Activated naive CD4-positive, alpha-beta T cell treated with anti-CD3 and anti-CD28 coated beads for 36 hours (primary cell): ENCODE measurements at regions of chr17 and their contacts with region 1.

Region 1: DNA sequence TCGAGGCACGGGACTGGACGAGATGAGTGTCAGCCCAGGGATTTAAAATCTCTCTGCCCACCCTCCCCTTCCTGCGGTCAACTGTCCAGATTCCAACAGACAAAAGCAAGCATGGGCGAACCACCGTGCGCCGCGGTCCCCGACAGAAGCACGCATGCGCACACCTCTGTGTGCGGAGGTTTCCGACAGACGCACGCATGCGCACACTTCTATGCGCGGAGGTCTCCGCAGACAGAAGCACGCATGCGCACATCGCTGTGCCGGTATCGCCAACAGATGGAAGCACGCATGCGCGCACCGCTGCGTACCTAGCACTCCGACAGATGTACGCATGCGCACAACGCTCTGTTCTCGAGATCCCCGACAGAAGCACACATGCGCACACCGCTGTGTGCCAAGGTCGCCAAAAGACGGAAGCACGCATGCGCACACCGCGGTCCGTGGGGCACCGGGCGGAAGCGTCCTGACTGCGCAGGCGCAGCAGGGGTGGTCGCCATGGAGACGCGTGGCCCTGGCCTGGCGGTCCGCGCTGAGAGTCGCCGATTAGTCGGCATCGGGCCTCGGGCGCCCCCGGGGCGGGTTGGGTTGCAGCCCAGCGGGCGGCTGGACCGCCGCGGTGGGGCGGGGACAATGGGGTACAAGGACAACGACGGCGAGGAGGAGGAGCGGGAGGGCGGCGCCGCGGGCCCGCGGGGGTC is 57.4 kb upstream of the RPH3AL start:
- DNase-seq: peak; percentile 100
- H3K4me3 Mint-ChIP-seq: peak overlapping the region; percentile 76
- H3K27ac Mint-ChIP-seq: peak overlapping the region; percentile 89
- H3K4me1 Mint-ChIP-seq: peaks cover 66% of the 10 kb centered on the region
- H3K27me3 Mint-ChIP-seq: peaks cover 3% of the 10 kb centered on the region

Region 2: DNA sequence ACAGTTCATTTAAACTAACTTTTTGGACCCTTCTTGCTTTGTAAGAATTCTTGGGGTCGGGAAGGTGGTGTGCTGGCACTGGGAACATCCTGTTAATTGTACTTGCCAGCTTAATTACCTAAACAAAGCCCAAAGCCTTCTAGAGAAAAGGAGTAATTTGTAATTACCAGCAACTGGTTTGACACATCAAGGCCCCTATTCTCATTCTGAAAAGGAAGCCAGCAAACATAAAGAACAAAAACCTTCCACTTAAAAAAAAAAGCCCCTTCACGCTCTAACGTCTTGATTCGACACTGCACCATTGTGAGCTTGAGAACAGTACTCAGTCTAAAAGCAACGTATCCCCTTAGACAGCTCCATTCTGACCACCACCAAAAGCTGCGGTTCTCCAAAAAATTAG is 17.3 kb after region 1 on chr17:
- CTCF ChIA-PET with region 1: interaction called, 11 read pairs
- intact Hi-C with region 1: no loop called
- DNase-seq: no peak
- H3K4me3 Mint-ChIP-seq: no peak overlapping the region
- H3K27ac Mint-ChIP-seq: peak overlapping the region; percentile 41
- H3K4me1 Mint-ChIP-seq: peaks cover 13% of the 10 kb centered on the region
- H3K27me3 Mint-ChIP-seq: no peaks in the 10 kb centered on the region

Region 3: DNA sequence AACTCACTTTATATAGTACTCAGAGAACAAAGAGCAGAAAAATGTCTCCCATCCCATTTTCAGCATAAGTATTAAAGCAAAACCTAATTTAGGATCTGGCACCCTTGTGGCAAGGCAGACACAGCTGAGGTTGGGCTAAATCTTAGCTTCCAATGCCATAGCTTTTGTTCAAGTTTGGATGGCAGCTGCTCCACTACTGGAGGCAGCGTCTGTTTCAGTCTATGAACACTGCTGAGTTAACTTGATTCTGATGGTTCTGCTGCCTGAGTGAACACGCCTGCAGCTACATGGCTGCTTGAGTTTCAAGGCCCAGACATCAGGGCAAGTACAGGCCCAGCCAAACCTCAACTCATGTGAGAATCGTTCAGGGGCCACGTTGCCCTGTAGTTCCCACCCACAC is 120.9 kb after region 1 on chr17:
- CTCF ChIA-PET with region 1: interaction called, 13 read pairs
- intact Hi-C with region 1: no loop called
- DNase-seq: no peak
- H3K4me3 Mint-ChIP-seq: no peak overlapping the region
- H3K27ac Mint-ChIP-seq: no peak overlapping the region
- H3K4me1 Mint-ChIP-seq: peaks cover 5% of the 10 kb centered on the region
- H3K27me3 Mint-ChIP-seq: no peaks in the 10 kb centered on the region

Region 4: GRCh38 chr17:588519-588918 is 178.5 kb after region 1 on chr17:
- CTCF ChIA-PET with region 1: no interaction called
- intact Hi-C with region 1: loop called (anchors 5 kb)
- DNase-seq: no peak
- H3K4me3 Mint-ChIP-seq: no peak overlapping the region
- H3K27ac Mint-ChIP-seq: no peak overlapping the region
- H3K4me1 Mint-ChIP-seq: no peaks in the 10 kb centered on the region
- H3K27me3 Mint-ChIP-seq: no peaks in the 10 kb centered on the region

Region 5: DNA sequence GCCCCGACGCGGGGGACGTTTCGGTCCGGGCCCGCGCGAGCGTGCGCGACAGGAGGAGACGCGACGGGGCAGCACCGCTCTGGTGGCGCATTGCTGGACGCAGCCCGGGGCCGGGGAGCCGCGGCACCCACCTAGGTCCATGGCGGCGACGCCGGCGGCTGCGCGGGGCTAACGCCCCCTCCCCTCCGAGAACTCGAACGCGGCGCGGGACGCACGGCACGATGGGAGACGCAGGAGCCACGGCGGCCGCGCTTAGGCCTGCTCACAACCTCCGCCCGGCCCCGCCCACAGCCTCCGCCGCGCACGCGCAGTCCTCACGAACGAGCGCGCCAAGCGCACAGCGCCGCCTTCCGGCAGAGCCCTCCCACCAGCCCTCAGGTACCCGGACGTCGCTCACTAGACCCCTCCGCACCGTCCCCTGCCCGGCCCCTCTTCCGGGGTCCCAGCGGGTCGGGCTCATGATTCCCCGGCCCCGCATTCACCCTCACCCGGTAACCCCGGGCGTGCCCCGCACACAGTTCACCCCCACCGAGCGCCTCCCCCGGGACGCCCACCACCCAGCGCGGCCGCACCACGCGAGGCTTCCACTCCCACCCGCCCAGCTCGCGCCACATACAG is 342.1 kb after region 1 on chr17 and contains the start of gene GEMIN4:
- CTCF ChIA-PET with region 1: no interaction called
- intact Hi-C with region 1: loop called (anchors 2 kb)
- DNase-seq: peak; percentile 97
- H3K4me3 Mint-ChIP-seq: peak within 1 kb of the TSS; percentile 93
- H3K27ac Mint-ChIP-seq: peak within 1 kb of the TSS; percentile 91
- H3K4me1 Mint-ChIP-seq: peaks cover 30% of the 10 kb centered on the region
- H3K27me3 Mint-ChIP-seq: no peaks in the 10 kb centered on the region
- total RNA-seq, gene GEMIN4: 29.7 to 29.9 TPM

Region 6: GRCh38 chr17:996554-997344 is 586.8 kb after region 1 on chr17 and contains the start of gene TIMM22:
- CTCF ChIA-PET with region 1: no interaction called
- intact Hi-C with region 1: loop called (anchors 1 kb)
- DNase-seq: peak; percentile 95
- H3K4me3 Mint-ChIP-seq: peak within 1 kb of the TSS; percentile 90
- H3K27ac Mint-ChIP-seq: peak within 1 kb of the TSS; percentile 96
- H3K4me1 Mint-ChIP-seq: peaks cover 26% of the 10 kb centered on the region
- H3K27me3 Mint-ChIP-seq: no peaks in the 10 kb centered on the region
- total RNA-seq, gene TIMM22: 7.3 to 7.4 TPM

Region 7: GRCh38 chr17:1087381-1088241 is 677.6 kb after region 1 on chr17:
- CTCF ChIA-PET with region 1: no interaction called
- intact Hi-C with region 1: no loop called
- DNase-seq: no peak
- H3K4me3 Mint-ChIP-seq: no peak overlapping the region
- H3K27ac Mint-ChIP-seq: no peak overlapping the region
- H3K4me1 Mint-ChIP-seq: no peaks in the 10 kb centered on the region
- H3K27me3 Mint-ChIP-seq: no peaks in the 10 kb centered on the region